ENCODE measurements at regions of chr18 and their contacts with region 1.

Region 1: DNA sequence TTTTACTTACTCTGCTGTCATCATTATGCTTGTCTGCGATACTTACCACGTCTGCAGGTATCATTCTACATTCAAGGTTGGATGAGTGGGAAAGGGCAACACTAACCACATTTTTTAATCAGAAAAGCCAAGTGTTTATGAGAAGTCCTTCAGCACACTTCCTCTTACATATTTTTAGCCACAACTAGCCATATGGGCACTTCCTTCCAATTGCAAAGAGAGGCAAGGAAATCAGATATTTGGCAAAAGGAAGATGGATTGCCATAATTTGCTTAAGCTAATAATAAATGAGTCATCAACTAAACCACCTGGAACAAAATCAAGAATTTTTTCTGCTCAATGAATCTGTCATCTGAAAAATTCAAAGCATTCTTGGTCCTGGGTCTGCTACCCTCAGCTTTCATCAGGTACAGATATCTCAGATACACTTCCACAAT is 16.7 kb upstream of the MRO start:
- DNase-seq: peak in 1 of 2 experiments; percentile 99
- H3K4me3 ChIP-seq: no peak overlapping the region
- H3K27ac ChIP-seq: peak overlapping the region; percentile 56
- H3K4me1 ChIP-seq: peaks cover 25% of the 10 kb centered on the region
- H3K27me3 ChIP-seq: no peaks in the 10 kb centered on the region
- CTCF ChIP-seq: no peak

Region 2: GRCh38 chr18:50847192-50847591 is 10.7 kb after region 1 on chr18:
- CTCF ChIA-PET with region 1: interaction called, 21 read pairs
- POLR2A ChIA-PET with region 1: no interaction called
- intact Hi-C with region 1: no loop called
- DNase-seq: no peak
- H3K4me3 ChIP-seq: no peak overlapping the region
- H3K27ac ChIP-seq: no peak overlapping the region
- H3K4me1 ChIP-seq: no peaks in the 10 kb centered on the region
- H3K27me3 ChIP-seq: no peaks in the 10 kb centered on the region
- CTCF ChIP-seq: no peak

Region 3: DNA sequence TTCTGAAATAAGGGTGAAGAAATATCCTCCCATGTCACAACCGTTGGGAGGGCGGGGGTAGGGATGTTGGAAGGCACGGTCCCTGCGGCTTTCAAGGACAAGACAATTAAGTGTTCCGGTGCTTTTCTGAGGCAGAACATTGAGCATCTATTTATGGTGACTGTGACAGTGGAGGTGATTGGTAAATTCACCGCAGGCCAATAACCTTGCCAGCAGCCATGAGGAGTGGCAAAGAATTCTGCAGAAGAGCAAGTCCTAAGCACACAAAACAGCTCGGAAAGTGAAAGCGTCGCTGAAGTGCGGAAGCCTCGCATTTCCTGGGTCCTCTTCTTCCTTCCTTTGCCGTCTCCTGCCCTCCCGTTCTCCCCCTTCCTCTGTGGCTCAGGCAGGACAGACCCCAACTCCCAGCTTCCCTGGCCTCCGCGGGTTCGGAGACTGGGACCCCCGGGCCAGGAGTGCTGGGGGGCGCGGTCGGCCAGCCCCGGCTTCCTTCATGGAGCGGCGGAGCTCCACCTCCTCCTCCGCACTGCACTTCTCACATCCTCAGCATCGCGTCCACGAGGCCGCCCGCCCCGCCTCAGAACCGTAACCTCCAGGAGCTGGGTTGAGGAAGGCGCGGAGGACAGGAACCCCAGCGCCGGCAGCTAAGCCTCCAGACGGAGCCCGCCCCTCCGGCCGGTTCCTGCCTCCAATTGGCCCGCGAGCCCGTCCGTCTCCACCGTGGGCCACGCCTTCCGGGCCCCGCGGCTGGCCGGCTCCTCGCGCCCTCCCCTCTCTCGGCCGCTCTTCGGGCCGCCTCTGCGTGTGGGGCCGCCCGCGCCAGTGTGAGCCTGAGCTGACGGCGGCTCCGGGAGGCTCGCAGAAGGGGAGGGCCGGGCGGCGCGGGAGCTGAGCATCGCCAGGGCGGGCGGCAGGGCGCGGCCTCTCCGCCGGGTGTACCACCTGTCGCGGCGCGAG is 42.1 kb after region 1 on chr18 and contains the start of gene ME2:
- CTCF ChIA-PET with region 1: no interaction called
- POLR2A ChIA-PET with region 1: interaction called, 3 read pairs
- intact Hi-C with region 1: loop called (anchors 5 kb)
- DNase-seq: peak; percentile 82 to 91
- H3K4me3 ChIP-seq: peak within 1 kb of the TSS; percentile 73
- H3K27ac ChIP-seq: peak within 1 kb of the TSS; percentile 61
- H3K4me1 ChIP-seq: peaks cover 31% of the 10 kb centered on the region
- H3K27me3 ChIP-seq: no peaks in the 10 kb centered on the region
- CTCF ChIP-seq: no peak
- total RNA-seq, gene ME2: 24.6 and 27.9 TPM in 2 replicates